WTC11 (cell line): ENCODE measurements at regions of chr6 and their contacts with region 1.

Region 1: GRCh38 chr6:46734867-46735719 is at the start of gene PLA2G7:
- DNase-seq: peak; percentile 65
- ATAC-seq: peak; percentile 78
- H3K4me3 Mint-ChIP-seq: peak within 1 kb of the TSS; percentile 92
- H3K27ac Mint-ChIP-seq: no peak within 1 kb of the TSS
- H3K4me1 Mint-ChIP-seq: peaks cover 28% of the 10 kb centered on the region
- H3K27me3 Mint-ChIP-seq: peaks cover 42% of the 10 kb centered on the region
- CTCF ChIP-seq: no peak
- total RNA-seq, gene PLA2G7: 2.3 to 2.4 TPM (median 2.3 TPM) in 3 replicates

Region 2: DNA sequence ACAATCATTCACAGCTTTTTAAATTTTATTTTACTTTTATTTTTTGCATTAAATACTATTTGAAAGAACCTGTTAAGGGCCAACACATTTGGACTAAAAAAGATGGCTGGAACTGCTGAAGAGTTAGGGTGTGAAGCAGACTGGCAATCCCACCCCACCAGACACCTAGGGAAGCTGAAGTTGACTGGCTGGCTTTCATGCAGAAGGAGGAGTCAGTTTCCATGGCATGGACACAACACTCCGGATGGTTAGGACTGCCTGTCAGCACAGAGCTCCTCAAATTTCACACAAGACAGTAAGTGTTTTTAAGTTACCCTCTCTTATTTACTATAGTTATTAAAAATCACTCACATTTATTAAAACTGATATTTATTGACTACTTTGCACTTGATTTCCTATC is 11.6 kb after region 1 on chr6 and contains the start of gene ANKRD66:
- CTCF ChIA-PET with region 1: interaction called, 11 read pairs
- POLR2A ChIA-PET with region 1: interaction called, 3 read pairs
- DNase-seq: no peak
- ATAC-seq: peak; percentile 15; the same call in 1 of the 2 replicates
- H3K4me3 Mint-ChIP-seq: no peak within 1 kb of the TSS
- H3K27ac Mint-ChIP-seq: no peak within 1 kb of the TSS
- H3K4me1 Mint-ChIP-seq: peaks cover 15% of the 10 kb centered on the region
- H3K27me3 Mint-ChIP-seq: no peaks in the 10 kb centered on the region; the same call in none of the 2 replicates
- CTCF ChIP-seq: no peak
- total RNA-seq, gene ANKRD66: not detected in 3 replicates